Breast epithelium (tissue), 4 donors: ENCODE measurements at regions of chr1 and their contacts with region 1.

Region 1: DNA sequence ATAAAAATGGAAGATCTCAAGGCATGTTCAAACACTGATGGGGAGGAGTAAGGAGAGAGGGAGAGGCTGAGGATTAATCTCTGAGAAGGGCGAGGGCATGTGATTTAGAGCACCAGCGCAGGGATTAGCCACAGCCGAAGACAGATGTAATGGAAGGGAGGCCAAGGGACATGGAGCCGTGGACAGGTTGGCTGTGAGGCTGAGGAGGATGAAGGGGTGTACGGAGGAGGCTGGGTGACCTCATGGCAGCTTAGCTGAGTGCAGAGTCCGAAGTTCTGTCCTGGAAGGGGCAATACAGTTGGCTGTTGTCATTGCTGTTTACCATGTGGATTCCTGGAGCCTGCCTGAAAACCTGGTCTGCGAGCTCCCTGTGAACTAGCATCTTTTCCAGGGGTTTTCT is 342.8 kb downstream of the RPS6KC1 start:
- DNase-seq: no peak
- H3K4me3 ChIP-seq: no peak overlapping the region
- H3K27ac ChIP-seq: no peak overlapping the region
- H3K4me1 ChIP-seq: no peaks in the 10 kb centered on the region
- H3K27me3 ChIP-seq: no peaks in the 10 kb centered on the region
- CTCF ChIP-seq: no peak
- POLR2A ChIP-seq: no peak

Region 2: DNA sequence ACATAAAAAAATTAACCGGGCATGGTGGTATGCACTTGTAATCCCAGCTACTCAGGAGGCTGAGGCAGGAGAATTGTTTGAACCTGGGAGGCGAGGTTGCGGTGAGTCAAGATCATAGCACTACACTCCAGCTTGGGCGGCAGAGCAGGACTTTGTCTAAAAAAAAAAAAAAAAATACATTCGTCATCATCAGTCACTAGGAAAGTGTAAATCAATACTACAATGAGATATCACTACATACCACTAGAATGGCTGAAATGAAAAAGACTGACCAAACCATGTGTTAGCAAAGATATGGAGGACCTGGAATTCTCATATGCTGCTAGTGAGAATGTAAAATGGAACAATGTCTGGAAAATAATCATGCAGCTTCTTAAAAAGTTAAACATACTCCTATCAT is 555.7 kb before region 1 on chr1:
- intact Hi-C with region 1: loop called (anchors 5 kb)
- DNase-seq: no peak
- H3K4me3 ChIP-seq: no peak overlapping the region
- H3K27ac ChIP-seq: no peak overlapping the region
- H3K4me1 ChIP-seq: no peaks in the 10 kb centered on the region
- H3K27me3 ChIP-seq: no peaks in the 10 kb centered on the region
- CTCF ChIP-seq: no peak
- POLR2A ChIP-seq: no peak

Region 3: DNA sequence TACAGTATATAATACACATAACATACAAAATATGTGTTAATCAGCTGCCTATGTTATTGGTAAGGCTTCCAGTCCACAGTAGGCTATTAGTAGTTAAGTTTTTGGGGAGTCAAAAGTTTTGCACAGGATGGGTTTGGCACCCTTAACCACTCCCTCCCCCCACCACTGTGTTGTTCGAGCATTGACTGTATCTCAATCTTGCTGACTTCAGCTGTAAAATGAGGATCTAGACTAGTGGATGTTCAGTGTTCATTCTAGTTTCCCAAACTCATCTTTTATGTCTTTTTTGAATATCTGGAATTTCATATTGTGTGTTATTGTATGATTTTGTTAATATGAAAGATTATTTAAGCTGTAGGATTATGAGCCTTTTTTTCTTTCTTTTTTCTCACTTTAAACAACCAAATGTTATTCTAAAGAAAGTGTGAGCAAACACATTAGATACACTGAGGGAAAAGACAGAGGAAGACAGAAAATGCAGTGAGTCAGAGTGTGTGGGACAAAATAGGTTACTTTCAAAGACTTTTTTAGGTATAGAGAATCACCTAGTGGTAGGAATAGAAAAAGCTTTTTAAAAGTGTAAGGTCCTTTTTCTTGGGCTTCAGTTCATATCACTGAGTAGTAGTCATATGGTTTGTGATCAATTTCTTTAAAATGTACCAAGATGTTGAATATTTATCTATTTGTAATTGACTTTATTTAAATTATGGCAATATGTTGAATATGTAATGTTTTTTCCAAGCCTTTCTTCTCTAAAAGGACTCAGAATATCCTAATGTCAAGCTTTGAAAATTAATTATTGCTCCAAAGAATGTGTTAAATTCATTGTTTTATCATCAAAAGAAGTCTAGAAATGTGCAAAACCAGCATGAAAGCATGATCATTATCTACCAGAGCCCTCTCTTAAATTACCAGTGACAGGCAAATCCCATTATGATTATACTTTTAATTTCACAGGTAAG is 1191.2 kb after region 1 on chr1:
- intact Hi-C with region 1: loop called (anchors 5 kb)
- DNase-seq: no peak
- H3K4me3 ChIP-seq: no peak overlapping the region
- H3K27ac ChIP-seq: no peak overlapping the region
- H3K4me1 ChIP-seq: peaks cover 0 to 9% of the 10 kb centered on the region in 2 donors
- H3K27me3 ChIP-seq: no peaks in the 10 kb centered on the region
- CTCF ChIP-seq: peak; percentile 56 to 88 (median 76)
- POLR2A ChIP-seq: no peak